A549 (cell line): ENCODE measurements at regions of chr10 and their contacts with region 1.

Region 1: DNA sequence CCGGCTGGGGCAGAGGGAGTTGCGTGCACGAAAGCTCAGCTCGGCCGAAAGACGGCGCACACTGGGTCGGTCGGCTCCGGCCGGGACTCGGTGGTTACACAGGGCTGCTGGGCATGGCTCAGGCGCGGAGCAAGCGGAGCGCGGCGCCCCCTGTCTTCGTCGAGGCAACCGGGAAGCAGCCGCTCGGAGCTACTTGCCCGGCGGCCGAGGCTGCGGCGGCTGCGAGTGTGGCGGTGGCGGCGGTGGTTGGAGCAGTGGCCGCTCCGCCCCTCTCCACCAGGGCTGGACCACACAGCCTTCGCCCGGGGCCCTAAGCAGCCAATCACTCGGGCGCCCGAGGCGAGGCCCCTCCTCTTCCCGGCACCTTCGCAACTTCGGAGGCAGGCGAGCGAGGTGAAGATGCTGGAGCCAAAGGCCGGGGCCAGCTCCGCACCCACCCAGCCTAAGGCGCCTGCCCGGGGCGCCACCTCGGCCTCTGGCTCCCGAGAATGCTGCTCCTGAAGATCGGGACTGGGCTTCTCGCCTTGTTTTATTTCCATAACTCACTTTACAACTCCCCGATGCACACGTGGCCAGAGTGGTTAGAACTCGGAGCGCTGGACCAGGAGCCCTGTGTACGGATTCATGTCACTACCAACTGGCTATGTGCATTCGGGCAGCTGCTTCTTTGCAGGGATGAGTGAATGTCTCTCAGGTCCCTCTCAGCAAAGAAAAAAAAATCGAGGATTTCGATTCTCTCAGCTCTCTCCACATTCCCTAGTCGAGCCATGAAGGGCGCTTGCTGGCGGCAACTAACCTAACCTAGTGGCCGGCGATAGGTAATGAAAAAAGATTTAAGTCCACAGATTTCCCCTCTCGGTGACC is at the start of gene TLL2:
- DNase-seq: peak; percentile 85 to 90
- ATAC-seq: peak; percentile 92 to 97
- H3K4me3 ChIP-seq: peak within 1 kb of the TSS; percentile 56
- H3K27ac ChIP-seq: peak within 1 kb of the TSS; percentile 37 to 77; a peak in 4 of 6 replicates
- H3K4me1 ChIP-seq: peaks cover 6% of the 10 kb centered on the region; the same call in 2 of the 3 replicates
- CTCF ChIP-seq: peak; percentile 52
- EP300 ChIP-seq: no peak
- POLR2A ChIP-seq: peak; percentile 55
- RAD21 ChIP-seq: peak; percentile 5 to 39; a peak in 3 of 5 replicates
- polyA plus RNA-seq, gene TLL2: 0.08 TPM in 2 replicates

Region 2: GRCh38 chr10:96374985-96375830 is 138.7 kb before region 1 on chr10:
- CTCF ChIA-PET with region 1: interaction called, 32 read pairs
- POLR2A ChIA-PET with region 1: no interaction called
- DNase-seq: peak; percentile 87 to 97
- ATAC-seq: peak; percentile 79 to 93
- H3K4me3 ChIP-seq: peak overlapping the region; percentile 42
- H3K27ac ChIP-seq: peak overlapping the region; percentile 59 to 82
- H3K4me1 ChIP-seq: peaks cover 2% of the 10 kb centered on the region; the same call in 1 of the 3 replicates
- CTCF ChIP-seq: peak; percentile 94
- EP300 ChIP-seq: no peak
- POLR2A ChIP-seq: peak; percentile 30
- RAD21 ChIP-seq: peak; percentile 84 to 86

Region 3: DNA sequence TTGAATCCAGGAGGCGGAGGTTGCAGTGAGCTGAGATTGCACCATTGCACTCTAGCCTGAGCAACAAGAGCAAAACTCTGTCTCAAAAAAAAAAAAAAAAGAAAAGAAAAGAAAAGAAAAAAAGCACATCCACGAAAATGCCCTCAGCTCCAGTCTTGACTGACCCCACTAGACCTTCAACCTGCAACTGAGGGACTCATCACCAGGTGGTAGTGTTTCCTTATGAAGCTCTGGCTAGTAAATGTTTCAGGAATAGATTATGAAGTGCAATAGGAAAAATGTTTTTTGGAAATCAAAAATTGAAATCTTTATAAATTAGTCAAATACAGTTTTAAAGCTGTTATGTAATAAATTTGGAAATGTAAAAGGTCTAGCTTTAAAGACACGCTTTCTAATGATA is 22.6 kb before region 1 on chr10:
- CTCF ChIA-PET with region 1: interaction called, 54 read pairs
- POLR2A ChIA-PET with region 1: no interaction called
- DNase-seq: no peak
- ATAC-seq: peak in 1 of 2 experiments; percentile 68; a peak in 3 of 6 replicates
- H3K4me3 ChIP-seq: no peak overlapping the region
- H3K27ac ChIP-seq: no peak overlapping the region
- H3K4me1 ChIP-seq: no peaks in the 10 kb centered on the region
- CTCF ChIP-seq: peak; percentile 23; the same call in 2 of the 3 replicates
- EP300 ChIP-seq: no peak
- POLR2A ChIP-seq: no peak
- RAD21 ChIP-seq: peak; percentile 33 to 59; a peak in 4 of 5 replicates

Region 4: DNA sequence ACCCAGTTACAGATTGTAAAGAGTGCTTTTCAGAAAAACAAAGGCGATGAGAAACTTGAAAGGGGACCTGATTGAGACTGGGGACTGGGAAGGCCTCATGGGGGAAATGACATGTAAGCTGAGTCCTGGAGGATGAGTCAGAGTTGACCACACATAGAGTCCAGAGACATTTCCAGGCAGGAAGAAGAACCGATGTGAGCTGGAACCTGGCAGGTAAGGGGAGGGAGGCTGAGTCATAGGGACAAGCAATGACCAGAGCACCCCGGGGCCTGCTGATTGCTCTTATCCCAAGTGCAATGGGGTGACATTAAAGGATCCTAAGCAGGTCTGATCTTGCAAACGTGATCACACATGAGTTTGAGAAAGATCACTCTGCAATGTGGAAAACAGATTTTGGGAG is 11.9 kb before region 1 on chr10:
- CTCF ChIA-PET with region 1: interaction called, 54 read pairs
- POLR2A ChIA-PET with region 1: no interaction called
- DNase-seq: no peak
- ATAC-seq: no peak; a peak in 1 of 6 replicates
- H3K4me3 ChIP-seq: no peak overlapping the region
- H3K27ac ChIP-seq: no peak overlapping the region
- H3K4me1 ChIP-seq: no peaks in the 10 kb centered on the region
- CTCF ChIP-seq: no peak
- EP300 ChIP-seq: no peak
- POLR2A ChIP-seq: no peak
- RAD21 ChIP-seq: no peak

Region 5: DNA sequence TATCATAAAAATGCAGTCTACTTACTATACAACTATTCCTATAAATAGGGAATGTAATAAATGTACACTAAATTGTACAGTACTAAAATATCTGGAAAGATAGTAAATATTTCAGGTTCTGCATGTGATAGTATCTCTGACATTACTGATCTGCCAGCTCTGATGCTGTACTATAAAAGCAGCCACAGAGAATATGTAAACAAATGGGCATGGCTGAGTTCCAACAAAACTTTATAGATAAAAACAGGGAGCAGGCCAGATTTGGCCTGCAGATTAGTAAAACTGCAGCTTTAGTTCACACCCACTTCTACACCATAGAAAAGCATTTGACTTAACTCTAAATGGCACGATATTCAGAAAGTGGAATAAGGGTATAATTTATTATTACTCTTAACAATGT is 18.6 kb after region 1 on chr10:
- CTCF ChIA-PET with region 1: interaction called, 16 read pairs
- POLR2A ChIA-PET with region 1: no interaction called
- DNase-seq: no peak
- ATAC-seq: no peak
- H3K4me3 ChIP-seq: no peak overlapping the region
- H3K27ac ChIP-seq: no peak overlapping the region
- H3K4me1 ChIP-seq: peaks cover 6% of the 10 kb centered on the region; the same call in 2 of the 3 replicates
- CTCF ChIP-seq: no peak
- EP300 ChIP-seq: no peak
- POLR2A ChIP-seq: no peak
- RAD21 ChIP-seq: no peak